PC-9 (cell line): ENCODE measurements at regions of chr4 and their contacts with region 1.

Region 1: GRCh38 chr4:81769244-81769643 is 297.5 kb upstream of the RASGEF1B start:
- DNase-seq: no peak
- H3K4me3 ChIP-seq: no peak overlapping the region
- H3K27ac ChIP-seq: no peak overlapping the region
- H3K4me1 ChIP-seq: no peaks in the 10 kb centered on the region
- H3K27me3 ChIP-seq: no peaks in the 10 kb centered on the region
- CTCF ChIP-seq: no peak

Region 2: DNA sequence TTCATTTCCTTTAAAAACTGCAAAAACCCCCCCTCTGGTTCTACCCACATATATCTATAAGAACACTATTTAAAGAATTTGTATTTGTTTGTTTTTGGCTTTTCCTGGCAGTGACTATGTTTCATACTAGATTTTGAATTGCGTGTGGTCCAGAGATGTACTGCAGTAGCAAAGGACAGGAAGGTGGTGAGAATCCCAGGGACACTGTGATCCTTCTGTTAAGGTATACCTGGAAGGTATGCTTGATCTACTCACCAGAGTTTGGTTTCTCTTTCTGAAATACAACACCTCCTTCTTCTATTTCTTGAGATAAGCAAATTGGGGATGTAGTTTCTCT is 167.9 kb before region 1 on chr4:
- CTCF ChIA-PET with region 1: no interaction called
- POLR2A ChIA-PET with region 1: interaction called, 12 read pairs
- intact Hi-C with region 1: no loop called
- DNase-seq: no peak
- H3K4me3 ChIP-seq: no peak overlapping the region
- H3K27ac ChIP-seq: no peak overlapping the region
- H3K4me1 ChIP-seq: no peaks in the 10 kb centered on the region
- H3K27me3 ChIP-seq: no peaks in the 10 kb centered on the region
- CTCF ChIP-seq: no peak

Region 3: GRCh38 chr4:81814987-81815541 is 45.8 kb after region 1 on chr4:
- CTCF ChIA-PET with region 1: no interaction called
- POLR2A ChIA-PET with region 1: no interaction called
- intact Hi-C with region 1: no loop called
- DNase-seq: no peak
- H3K4me3 ChIP-seq: no peak overlapping the region
- H3K27ac ChIP-seq: no peak overlapping the region
- H3K4me1 ChIP-seq: no peaks in the 10 kb centered on the region
- H3K27me3 ChIP-seq: no peaks in the 10 kb centered on the region
- CTCF ChIP-seq: no peak

Region 4: DNA sequence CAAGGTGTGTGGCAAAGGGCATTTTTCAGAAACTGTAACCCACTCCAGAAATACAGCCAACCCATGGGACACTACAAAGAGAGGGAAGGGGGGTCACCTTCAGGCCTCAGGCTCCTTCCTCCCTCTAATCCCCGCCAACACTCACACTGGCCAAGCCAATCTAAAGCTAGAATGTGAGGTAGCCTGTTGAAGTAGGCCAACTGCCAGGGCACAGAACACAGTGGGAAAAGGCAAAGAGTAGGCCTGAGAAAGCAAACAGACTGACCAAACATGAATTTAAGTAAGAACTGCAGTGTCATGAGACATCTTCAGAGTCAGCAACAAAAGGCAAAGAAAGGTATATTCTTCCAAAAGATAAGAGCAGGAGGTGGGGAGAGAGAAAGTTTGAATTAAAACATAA is 315.5 kb after region 1 on chr4:
- CTCF ChIA-PET with region 1: no interaction called
- POLR2A ChIA-PET with region 1: no interaction called
- intact Hi-C with region 1: no loop called
- DNase-seq: no peak
- H3K4me3 ChIP-seq: no peak overlapping the region
- H3K27ac ChIP-seq: no peak overlapping the region
- H3K4me1 ChIP-seq: no peaks in the 10 kb centered on the region
- H3K27me3 ChIP-seq: no peaks in the 10 kb centered on the region
- CTCF ChIP-seq: no peak